Activated naive CD4-positive, alpha-beta T cell treated with anti-CD3 and anti-CD28 coated beads for 36 hours (primary cell): ENCODE measurements at regions of chr19 and their contacts with region 1.

Region 1: GRCh38 chr19:46748325-46749109 is 2.3 kb upstream of the STRN4 start:
- DNase-seq: peak; percentile 86
- H3K4me3 Mint-ChIP-seq: no peak overlapping the region
- H3K27ac Mint-ChIP-seq: no peak overlapping the region
- H3K4me1 Mint-ChIP-seq: peaks cover 33% of the 10 kb centered on the region
- H3K27me3 Mint-ChIP-seq: no peaks in the 10 kb centered on the region

Region 2: GRCh38 chr19:46107371-46107770 is 641.1 kb before region 1 on chr19:
- CTCF ChIA-PET with region 1: no interaction called
- intact Hi-C with region 1: no loop called
- DNase-seq: no peak
- H3K4me3 Mint-ChIP-seq: no peak overlapping the region
- H3K27ac Mint-ChIP-seq: no peak overlapping the region
- H3K4me1 Mint-ChIP-seq: no peaks in the 10 kb centered on the region
- H3K27me3 Mint-ChIP-seq: peaks cover 8% of the 10 kb centered on the region

Region 3: GRCh38 chr19:46529622-46530462 is 218.7 kb before region 1 on chr19:
- CTCF ChIA-PET with region 1: interaction called, 8 read pairs
- intact Hi-C with region 1: loop called (anchors 2 kb)
- DNase-seq: peak; percentile 84
- H3K4me3 Mint-ChIP-seq: no peak overlapping the region
- H3K27ac Mint-ChIP-seq: peak overlapping the region; percentile 30
- H3K4me1 Mint-ChIP-seq: peaks cover 27% of the 10 kb centered on the region
- H3K27me3 Mint-ChIP-seq: no peaks in the 10 kb centered on the region

Region 4: DNA sequence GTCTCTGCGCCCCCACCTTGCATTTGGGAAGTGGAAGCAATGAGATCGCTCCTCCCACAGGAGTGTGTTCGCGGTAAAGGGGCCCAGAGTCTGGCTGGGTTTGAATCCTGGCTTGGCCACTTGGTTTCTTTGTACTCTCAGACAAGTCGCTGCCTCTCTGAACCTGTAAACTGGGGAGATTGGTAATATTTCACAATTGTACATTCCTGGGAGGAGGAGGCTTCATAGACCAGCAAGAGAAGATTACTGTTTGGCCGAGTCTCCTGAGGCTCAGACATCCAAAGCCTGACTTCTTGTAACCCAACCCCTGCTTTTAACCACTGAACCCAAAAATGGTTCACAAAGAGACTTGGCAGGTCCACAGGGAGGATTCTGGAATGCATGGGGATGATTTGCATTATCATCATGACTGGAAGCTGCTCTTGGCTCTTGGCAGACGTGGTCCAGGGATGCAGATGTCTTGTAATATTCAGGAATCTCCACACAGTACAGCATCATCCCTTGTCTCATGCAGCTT is 11.4 kb after region 1 on chr19:
- CTCF ChIA-PET with region 1: interaction called, 40 read pairs
- intact Hi-C with region 1: no loop called
- DNase-seq: no peak
- H3K4me3 Mint-ChIP-seq: no peak overlapping the region
- H3K27ac Mint-ChIP-seq: no peak overlapping the region
- H3K4me1 Mint-ChIP-seq: no peaks in the 10 kb centered on the region
- H3K27me3 Mint-ChIP-seq: no peaks in the 10 kb centered on the region

Region 5: GRCh38 chr19:46766569-46767317 is 18.2 kb after region 1 on chr19:
- CTCF ChIA-PET with region 1: interaction called, 40 read pairs
- intact Hi-C with region 1: no loop called
- DNase-seq: peak; percentile 74
- H3K4me3 Mint-ChIP-seq: no peak overlapping the region
- H3K27ac Mint-ChIP-seq: no peak overlapping the region
- H3K4me1 Mint-ChIP-seq: peaks cover 2% of the 10 kb centered on the region
- H3K27me3 Mint-ChIP-seq: no peaks in the 10 kb centered on the region

Region 6: DNA sequence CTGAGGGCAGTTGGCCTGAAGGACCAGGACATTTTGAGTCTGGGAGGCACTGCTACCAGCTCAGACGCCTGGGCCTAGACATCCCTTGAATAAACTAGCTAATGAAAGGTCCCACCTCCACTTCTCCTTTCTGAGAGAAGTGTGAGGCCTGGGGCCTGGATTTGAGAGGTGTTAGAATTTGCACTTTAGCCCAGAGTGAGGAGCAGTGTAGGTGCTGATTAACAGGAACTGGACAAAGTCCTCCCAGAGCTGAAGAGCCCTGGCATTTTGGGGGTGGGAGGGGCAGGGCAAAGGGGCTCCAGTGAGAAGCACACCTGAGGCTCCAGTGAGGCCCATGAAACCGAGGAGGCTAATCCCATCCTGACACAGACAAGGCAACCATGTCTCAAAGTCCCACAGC is 55.0 kb after region 1 on chr19:
- CTCF ChIA-PET with region 1: no interaction called
- intact Hi-C with region 1: no loop called
- DNase-seq: no peak
- H3K4me3 Mint-ChIP-seq: no peak overlapping the region
- H3K27ac Mint-ChIP-seq: no peak overlapping the region
- H3K4me1 Mint-ChIP-seq: no peaks in the 10 kb centered on the region
- H3K27me3 Mint-ChIP-seq: no peaks in the 10 kb centered on the region